Calu3 (cell line): ENCODE measurements at regions of chr4 and their contacts with region 1.

Region 1: GRCh38 chr4:55554453-55555030 is 7.8 kb upstream of the CLOCK start:
- DNase-seq: no peak
- H3K4me3 Mint-ChIP-seq: no peak overlapping the region
- H3K27ac Mint-ChIP-seq: no peak overlapping the region
- H3K4me1 Mint-ChIP-seq: peaks cover 13% of the 10 kb centered on the region
- H3K27me3 Mint-ChIP-seq: no peaks in the 10 kb centered on the region
- CTCF ChIP-seq: no peak

Region 2: DNA sequence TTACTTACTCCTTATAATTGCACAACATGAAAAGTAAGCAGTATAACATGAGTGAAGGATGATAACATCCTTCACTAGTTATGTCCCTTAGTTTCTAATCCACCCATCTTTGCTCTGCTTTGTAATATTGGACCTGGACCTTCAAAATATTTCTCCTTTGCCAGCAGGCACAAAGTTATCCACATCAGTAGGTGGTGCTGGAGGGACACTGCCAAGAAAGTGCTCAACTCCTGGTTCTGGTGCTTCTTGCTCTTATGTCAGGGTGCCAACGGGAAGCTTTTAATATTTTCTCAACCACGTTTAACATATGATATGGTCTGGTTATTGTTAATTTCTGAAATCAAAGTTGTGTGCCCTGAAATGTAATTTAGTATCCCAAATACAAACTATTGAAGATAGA is 109.7 kb before region 1 on chr4:
- CTCF ChIA-PET with region 1: no interaction called
- intact Hi-C with region 1: loop called (anchors 5 kb)
- DNase-seq: no peak
- H3K4me3 Mint-ChIP-seq: no peak overlapping the region
- H3K27ac Mint-ChIP-seq: no peak overlapping the region
- H3K4me1 Mint-ChIP-seq: no peaks in the 10 kb centered on the region
- H3K27me3 Mint-ChIP-seq: no peaks in the 10 kb centered on the region
- CTCF ChIP-seq: no peak

Region 3: DNA sequence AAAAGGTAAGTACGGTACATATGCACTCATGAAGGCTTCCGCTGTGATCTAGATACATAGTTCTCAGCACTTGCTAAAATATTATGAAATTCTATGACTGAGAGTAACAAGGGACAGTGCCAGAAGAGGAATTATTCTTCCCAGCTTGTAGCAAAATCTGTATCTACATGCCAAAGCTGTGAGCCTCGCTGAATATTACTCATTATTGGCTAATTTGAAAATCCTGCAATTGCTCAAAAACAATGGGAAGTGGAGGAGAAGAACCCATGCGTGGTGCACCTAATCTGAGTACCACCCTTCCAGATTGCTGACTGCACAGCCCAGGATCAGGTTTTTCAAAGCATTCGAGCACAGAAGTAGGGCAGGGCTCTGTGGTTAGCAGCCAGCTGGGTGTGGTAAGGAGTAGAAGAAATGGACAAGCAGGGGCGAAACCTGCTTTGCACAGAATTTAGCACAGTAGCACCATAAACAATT is 54.9 kb after region 1 on chr4:
- CTCF ChIA-PET with region 1: no interaction called
- intact Hi-C with region 1: no loop called
- DNase-seq: no peak
- H3K4me3 Mint-ChIP-seq: no peak overlapping the region
- H3K27ac Mint-ChIP-seq: no peak overlapping the region
- H3K4me1 Mint-ChIP-seq: no peaks in the 10 kb centered on the region
- H3K27me3 Mint-ChIP-seq: no peaks in the 10 kb centered on the region
- CTCF ChIP-seq: no peak

Region 4: DNA sequence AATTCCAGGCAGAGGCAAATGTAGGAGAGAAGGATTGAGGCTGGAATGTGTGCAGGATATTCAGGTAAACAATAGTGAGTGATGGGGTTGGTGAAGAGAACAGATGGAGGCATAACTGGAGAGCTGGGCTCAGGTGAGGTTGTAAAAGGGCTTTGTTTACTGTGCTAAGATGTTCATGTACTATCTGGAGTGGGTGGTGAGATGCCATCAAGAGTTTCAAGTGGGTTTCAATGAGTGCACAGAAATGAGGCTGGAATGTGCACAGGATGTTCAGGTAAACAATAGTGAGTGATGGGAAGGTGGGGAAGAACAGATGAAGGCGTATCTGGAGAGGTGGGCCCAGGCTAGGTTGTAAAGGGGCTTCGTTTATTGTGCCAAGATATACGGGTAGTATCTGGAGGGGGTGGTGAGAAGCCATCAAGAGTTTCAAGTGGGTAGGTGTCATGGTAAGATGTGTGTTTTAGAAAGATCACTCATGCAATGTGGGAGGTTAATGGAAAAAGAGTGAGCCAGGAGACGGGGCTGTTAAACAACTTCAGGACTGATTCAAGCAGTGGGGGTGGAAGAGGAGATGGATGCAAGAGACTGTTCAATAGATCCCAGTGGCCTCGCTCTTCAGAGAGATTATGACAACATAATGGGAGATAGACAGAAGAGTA is 107.0 kb after region 1 on chr4:
- CTCF ChIA-PET with region 1: no interaction called
- intact Hi-C with region 1: no loop called
- DNase-seq: no peak
- H3K4me3 Mint-ChIP-seq: no peak overlapping the region
- H3K27ac Mint-ChIP-seq: no peak overlapping the region
- H3K4me1 Mint-ChIP-seq: no peaks in the 10 kb centered on the region
- H3K27me3 Mint-ChIP-seq: peaks cover 7% of the 10 kb centered on the region
- CTCF ChIP-seq: no peak

Region 5: GRCh38 chr4:55722132-55722531 is 167.6 kb after region 1 on chr4:
- CTCF ChIA-PET with region 1: no interaction called
- intact Hi-C with region 1: no loop called
- DNase-seq: no peak
- H3K4me3 Mint-ChIP-seq: no peak overlapping the region
- H3K27ac Mint-ChIP-seq: no peak overlapping the region
- H3K4me1 Mint-ChIP-seq: no peaks in the 10 kb centered on the region
- H3K27me3 Mint-ChIP-seq: no peaks in the 10 kb centered on the region
- CTCF ChIP-seq: no peak